CD4-positive, alpha-beta T cell (primary cell): ENCODE measurements at regions of chr2 and their contacts with region 1.

Region 1: DNA sequence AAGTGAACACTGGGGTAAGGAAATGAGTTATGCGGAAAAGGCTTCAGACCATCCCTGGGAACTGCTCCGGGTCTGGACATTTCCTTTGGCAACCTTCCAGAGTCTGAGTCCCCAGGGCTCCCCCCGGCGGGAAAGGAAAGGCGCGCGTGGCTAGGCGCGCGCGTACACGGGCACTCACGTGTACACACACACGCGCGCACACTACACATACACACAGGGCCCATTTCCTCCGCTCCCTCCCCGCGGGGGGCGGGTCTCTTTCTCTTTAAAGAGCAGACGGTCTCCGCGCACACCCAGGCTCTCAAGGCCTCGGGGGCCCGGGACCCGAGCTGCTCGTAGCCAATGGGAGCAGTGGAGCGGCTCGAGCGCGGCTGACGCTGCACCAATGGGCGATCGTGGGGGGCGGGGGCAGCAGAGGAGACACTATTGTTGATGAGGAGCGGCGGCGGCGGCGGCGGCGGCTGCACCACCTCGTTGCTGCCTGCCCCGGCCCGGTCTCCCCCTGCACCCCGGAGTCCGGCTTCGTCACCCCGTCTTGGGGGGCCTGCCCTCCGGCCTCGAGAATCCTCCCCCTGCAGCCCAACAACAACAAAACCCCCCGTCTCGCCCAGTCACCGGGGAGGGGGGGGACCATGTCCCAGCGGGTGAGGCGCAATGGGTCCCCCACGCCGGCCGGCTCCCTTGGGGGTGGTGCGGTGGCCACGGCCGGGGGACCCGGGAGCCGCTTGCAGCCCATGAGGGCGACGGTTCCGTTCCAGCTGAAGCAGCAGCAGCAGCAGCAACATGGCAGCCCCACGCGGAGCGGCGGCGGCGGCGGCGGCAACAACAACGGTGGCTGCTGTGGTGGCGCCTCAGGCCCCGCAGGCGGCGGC is at the start of gene FAM117B:
- DNase-seq: peak; percentile 97 to 99 (median 98)
- ATAC-seq: peak; percentile 87
- H3K4me3 ChIP-seq: peak within 1 kb of the TSS; percentile 86
- H3K4me3 Mint-ChIP-seq: peak within 1 kb of the TSS; percentile 95
- H3K27ac ChIP-seq: peak within 1 kb of the TSS; percentile 89 to 96
- H3K27ac Mint-ChIP-seq: peak within 1 kb of the TSS; percentile 98
- H3K4me1 ChIP-seq: peaks cover 34% of the 10 kb centered on the region
- H3K4me1 Mint-ChIP-seq: peaks cover 56% of the 10 kb centered on the region
- H3K27me3 ChIP-seq: no peaks in the 10 kb centered on the region
- H3K27me3 Mint-ChIP-seq: no peaks in the 10 kb centered on the region
- CTCF ChIP-seq: no peak
- total RNA-seq, gene FAM117B: 46.8 to 50.4 TPM

Region 2: GRCh38 chr2:202033321-202034248 is 601.2 kb before region 1 on chr2 and contains the start of gene FZD7:
- CTCF ChIA-PET with region 1: no interaction called
- POLR2A ChIA-PET with region 1: no interaction called
- intact Hi-C with region 1: loop called in 1 of 2 experiments (anchors 10 kb)
- DNase-seq: peak; percentile 69 to 91 (median 82)
- ATAC-seq: peak; percentile 78
- H3K4me3 ChIP-seq: peak within 1 kb of the TSS; percentile 95
- H3K4me3 Mint-ChIP-seq: peak within 1 kb of the TSS; percentile 94
- H3K27ac ChIP-seq: no peak within 1 kb of the TSS
- H3K27ac Mint-ChIP-seq: peak within 1 kb of the TSS; percentile 45
- H3K4me1 ChIP-seq: peaks cover 31% of the 10 kb centered on the region
- H3K4me1 Mint-ChIP-seq: peaks cover 12% of the 10 kb centered on the region
- H3K27me3 ChIP-seq: peaks cover 17 to 30% of the 10 kb centered on the region in 2 experiments
- H3K27me3 Mint-ChIP-seq: peaks cover 9% of the 10 kb centered on the region
- CTCF ChIP-seq: no peak
- total RNA-seq, gene FZD7: 0.17 to 0.25 TPM

Region 3: GRCh38 chr2:202541137-202541536 is 93.7 kb before region 1 on chr2:
- CTCF ChIA-PET with region 1: no interaction called
- POLR2A ChIA-PET with region 1: no interaction called
- intact Hi-C with region 1: no loop called
- DNase-seq: no peak
- ATAC-seq: no peak
- H3K4me3 ChIP-seq: no peak overlapping the region
- H3K4me3 Mint-ChIP-seq: no peak overlapping the region
- H3K27ac ChIP-seq: no peak overlapping the region
- H3K27ac Mint-ChIP-seq: no peak overlapping the region
- H3K4me1 ChIP-seq: no peaks in the 10 kb centered on the region
- H3K4me1 Mint-ChIP-seq: no peaks in the 10 kb centered on the region
- H3K27me3 ChIP-seq: no peaks in the 10 kb centered on the region
- H3K27me3 Mint-ChIP-seq: no peaks in the 10 kb centered on the region
- CTCF ChIP-seq: no peak

Region 4: DNA sequence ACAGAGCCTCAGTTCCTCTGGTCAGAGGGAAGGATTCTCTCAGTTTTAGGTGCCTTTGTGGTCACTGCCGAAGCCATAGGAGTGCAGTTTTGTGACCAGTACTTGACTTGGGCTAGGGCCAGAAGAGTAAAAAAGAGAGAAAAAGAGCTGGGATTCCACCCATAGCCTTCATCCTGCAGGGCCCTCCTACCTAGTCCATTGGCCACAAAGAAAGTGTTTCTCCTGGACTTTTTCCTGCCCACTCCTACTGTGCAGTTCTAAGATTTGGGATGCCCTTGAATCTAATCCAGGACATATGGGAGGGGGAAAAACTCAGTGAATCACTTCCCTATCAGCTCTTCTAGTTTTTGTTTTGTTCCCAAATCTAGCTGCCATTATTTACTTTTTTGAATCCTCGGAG is 26.0 kb after region 1 on chr2:
- CTCF ChIA-PET with region 1: interaction called, 4 read pairs
- POLR2A ChIA-PET with region 1: interaction called, 33 read pairs
- intact Hi-C with region 1: no loop called
- DNase-seq: no peak
- ATAC-seq: no peak
- H3K4me3 ChIP-seq: no peak overlapping the region
- H3K4me3 Mint-ChIP-seq: no peak overlapping the region
- H3K27ac ChIP-seq: no peak overlapping the region
- H3K27ac Mint-ChIP-seq: peak overlapping the region; percentile 37
- H3K4me1 ChIP-seq: peaks cover 28% of the 10 kb centered on the region
- H3K4me1 Mint-ChIP-seq: peaks cover 89% of the 10 kb centered on the region
- H3K27me3 ChIP-seq: no peaks in the 10 kb centered on the region
- H3K27me3 Mint-ChIP-seq: no peaks in the 10 kb centered on the region
- CTCF ChIP-seq: no peak

Region 5: GRCh38 chr2:202703091-202703490 is 68.3 kb after region 1 on chr2:
- CTCF ChIA-PET with region 1: no interaction called
- POLR2A ChIA-PET with region 1: interaction called, 19 read pairs
- intact Hi-C with region 1: no loop called
- DNase-seq: no peak
- ATAC-seq: no peak
- H3K4me3 ChIP-seq: no peak overlapping the region
- H3K4me3 Mint-ChIP-seq: no peak overlapping the region
- H3K27ac ChIP-seq: no peak overlapping the region
- H3K27ac Mint-ChIP-seq: peak overlapping the region; percentile 1
- H3K4me1 ChIP-seq: peaks cover 7% of the 10 kb centered on the region
- H3K4me1 Mint-ChIP-seq: peaks cover 66% of the 10 kb centered on the region
- H3K27me3 ChIP-seq: no peaks in the 10 kb centered on the region
- H3K27me3 Mint-ChIP-seq: no peaks in the 10 kb centered on the region
- CTCF ChIP-seq: no peak

Region 6: DNA sequence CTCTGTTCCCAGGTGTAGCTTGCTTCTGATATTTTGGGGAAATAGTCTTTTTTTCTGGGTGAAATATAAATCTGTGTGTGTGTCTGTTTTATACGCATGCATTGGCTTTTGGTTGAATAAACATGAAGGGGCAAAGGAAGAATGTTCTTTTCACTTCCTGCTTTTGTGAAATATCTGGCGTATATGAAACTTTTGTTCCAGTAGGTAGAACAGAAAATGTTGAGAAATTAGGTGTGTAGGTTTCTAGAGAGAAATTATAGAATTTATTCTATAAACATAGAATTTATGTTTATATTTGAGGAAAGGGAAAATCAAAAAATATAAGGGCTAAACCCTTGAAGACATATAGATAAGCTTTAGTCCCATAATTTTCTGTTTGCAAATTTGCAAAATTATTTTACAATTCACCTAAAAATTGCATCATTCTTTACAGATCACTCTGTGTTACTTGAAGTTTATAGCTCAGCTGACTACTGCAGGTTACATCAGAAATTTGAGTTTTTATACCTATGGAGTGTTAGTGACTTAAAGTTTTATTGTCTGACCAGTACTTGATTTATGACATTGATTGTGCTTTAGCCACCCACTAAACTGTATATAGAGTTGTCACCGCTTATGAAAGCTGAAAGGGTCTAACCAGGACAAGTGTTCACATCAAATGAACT is 116.1 kb after region 1 on chr2:
- CTCF ChIA-PET with region 1: no interaction called
- POLR2A ChIA-PET with region 1: interaction called, 22 read pairs
- intact Hi-C with region 1: loop called in 1 of 2 experiments (anchors 5 kb)
- DNase-seq: no peak
- ATAC-seq: peak; percentile 54
- H3K4me3 ChIP-seq: no peak overlapping the region
- H3K4me3 Mint-ChIP-seq: peak overlapping the region; percentile 64
- H3K27ac ChIP-seq: no peak overlapping the region
- H3K27ac Mint-ChIP-seq: peak overlapping the region; percentile 76
- H3K4me1 ChIP-seq: peaks cover 8% of the 10 kb centered on the region
- H3K4me1 Mint-ChIP-seq: peaks cover 88% of the 10 kb centered on the region
- H3K27me3 ChIP-seq: no peaks in the 10 kb centered on the region
- H3K27me3 Mint-ChIP-seq: no peaks in the 10 kb centered on the region
- CTCF ChIP-seq: no peak

Region 7: DNA sequence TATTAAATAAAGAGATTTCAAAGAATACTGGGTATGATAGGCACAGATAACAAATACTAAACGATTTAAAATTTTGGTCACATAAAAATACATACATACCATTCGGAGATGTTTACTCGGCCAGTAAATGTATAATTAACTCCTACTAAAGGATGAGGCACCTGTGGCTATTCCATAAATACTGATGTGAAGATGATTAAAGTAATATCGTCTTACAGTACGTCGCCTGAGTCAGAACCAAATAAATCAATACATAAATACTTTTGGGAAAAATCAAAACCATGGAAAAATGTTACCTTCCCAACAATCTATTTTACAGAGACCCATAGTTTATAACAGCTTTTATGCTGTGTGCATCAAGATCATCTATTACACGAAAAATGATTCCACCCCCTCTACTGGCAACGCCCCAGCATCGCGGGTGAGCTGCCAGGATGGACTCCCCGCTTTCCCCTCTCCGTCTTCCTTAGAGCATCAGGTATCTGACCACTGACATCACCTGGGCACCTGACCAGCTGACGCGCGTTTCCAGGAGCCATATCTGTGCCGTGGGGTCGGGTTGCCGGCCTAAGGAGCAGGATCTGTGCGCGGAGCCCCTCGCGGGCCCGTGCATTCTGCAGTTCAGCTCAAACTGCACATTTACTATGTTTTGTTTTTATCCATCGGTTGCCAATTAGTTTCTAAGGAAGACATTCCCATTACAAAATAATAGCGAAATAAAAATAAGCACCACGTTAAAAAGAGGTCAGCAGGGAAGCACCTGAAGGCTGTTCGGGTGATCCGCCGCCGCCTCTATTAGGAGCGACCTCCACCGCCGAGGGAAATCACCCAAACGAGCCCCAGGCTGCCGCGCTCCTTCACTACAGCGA is 235.9 kb after region 1 on chr2:
- CTCF ChIA-PET with region 1: no interaction called
- POLR2A ChIA-PET with region 1: interaction called, 23 read pairs
- intact Hi-C with region 1: no loop called
- DNase-seq: peak; percentile 39 to 75 (median 56)
- ATAC-seq: peak; percentile 81
- H3K4me3 ChIP-seq: peak overlapping the region; percentile 84
- H3K4me3 Mint-ChIP-seq: peak overlapping the region; percentile 95
- H3K27ac ChIP-seq: no peak overlapping the region
- H3K27ac Mint-ChIP-seq: peak overlapping the region; percentile 26
- H3K4me1 ChIP-seq: peaks cover 6% of the 10 kb centered on the region
- H3K4me1 Mint-ChIP-seq: peaks cover 13% of the 10 kb centered on the region
- H3K27me3 ChIP-seq: no peaks in the 10 kb centered on the region
- H3K27me3 Mint-ChIP-seq: no peaks in the 10 kb centered on the region
- CTCF ChIP-seq: peak; percentile 67

Region 8: GRCh38 chr2:203238704-203239526 is 604.1 kb after region 1 on chr2 and contains the start of gene CYP20A1:
- CTCF ChIA-PET with region 1: interaction called, 4 read pairs
- POLR2A ChIA-PET with region 1: interaction called, 18 read pairs
- intact Hi-C with region 1: loop called in 1 of 2 experiments (anchors 5 kb)
- DNase-seq: peak; percentile 93 to 98 (median 97)
- ATAC-seq: peak; percentile 79
- H3K4me3 ChIP-seq: peak within 1 kb of the TSS; percentile 88
- H3K4me3 Mint-ChIP-seq: peak within 1 kb of the TSS; percentile 96
- H3K27ac ChIP-seq: peak within 1 kb of the TSS; percentile 95 to 97
- H3K27ac Mint-ChIP-seq: peak within 1 kb of the TSS; percentile 99
- H3K4me1 ChIP-seq: peaks cover 28% of the 10 kb centered on the region
- H3K4me1 Mint-ChIP-seq: peaks cover 45% of the 10 kb centered on the region
- H3K27me3 ChIP-seq: no peaks in the 10 kb centered on the region
- H3K27me3 Mint-ChIP-seq: no peaks in the 10 kb centered on the region
- CTCF ChIP-seq: peak; percentile 12
- total RNA-seq, gene CYP20A1: 21.9 to 22.6 TPM